ENCODE measurements at regions of chr5 and their contacts with region 1.

Region 1: DNA sequence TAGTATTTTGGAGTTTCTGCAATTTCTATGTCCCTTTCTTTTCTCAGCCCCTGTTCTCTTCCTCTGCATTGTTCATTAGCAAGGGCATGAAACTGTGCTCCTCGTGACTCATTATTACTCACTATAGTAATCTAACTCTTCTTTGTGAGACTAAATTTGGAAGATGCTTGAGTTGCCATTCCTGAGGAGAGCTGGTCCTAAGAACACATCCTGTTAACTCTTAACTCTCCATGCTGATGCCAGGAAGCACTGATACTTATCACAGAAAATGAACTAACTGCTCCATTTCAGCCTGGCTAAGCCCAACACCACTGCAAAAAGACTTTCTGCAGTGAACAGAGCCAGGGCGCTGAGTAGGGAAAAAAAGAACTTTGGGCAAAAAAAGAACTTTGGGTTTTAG is 10.6 kb upstream of the CSNK1A1 start:
- DNase-seq: no peak
- ATAC-seq: no peak
- H3K4me3 ChIP-seq: no peak overlapping the region
- H3K4me3 Mint-ChIP-seq: peak overlapping the region in 8 of 10 donors; percentile 4 to 67 (median 56)
- H3K27ac ChIP-seq: peak overlapping the region; percentile 50
- H3K27ac Mint-ChIP-seq: peak overlapping the region; percentile 57 to 84 (median 74)
- H3K4me1 ChIP-seq: peaks cover 0 to 17% of the 10 kb centered on the region in 2 donors
- H3K4me1 Mint-ChIP-seq: peaks cover 14 to 36% (median 25%) of the 10 kb centered on the region in 7 donors
- H3K27me3 ChIP-seq: no peaks in the 10 kb centered on the region
- H3K27me3 Mint-ChIP-seq: no peaks in the 10 kb centered on the region

Region 2: GRCh38 chr5:149005077-149005892 is 556.6 kb before region 1 on chr5:
- CTCF ChIA-PET with region 1: no interaction called
- POLR2A ChIA-PET with region 1: no interaction called
- intact Hi-C with region 1: no loop called
- DNase-seq: no peak
- ATAC-seq: no peak
- H3K4me3 ChIP-seq: no peak overlapping the region
- H3K4me3 Mint-ChIP-seq: no peak overlapping the region
- H3K27ac ChIP-seq: no peak overlapping the region
- H3K27ac Mint-ChIP-seq: no peak overlapping the region
- H3K4me1 ChIP-seq: no peaks in the 10 kb centered on the region
- H3K4me1 Mint-ChIP-seq: no peaks in the 10 kb centered on the region
- H3K27me3 ChIP-seq: no peaks in the 10 kb centered on the region
- H3K27me3 Mint-ChIP-seq: peaks cover 5 to 15% (median 9%) of the 10 kb centered on the region in 5 donors

Region 3: DNA sequence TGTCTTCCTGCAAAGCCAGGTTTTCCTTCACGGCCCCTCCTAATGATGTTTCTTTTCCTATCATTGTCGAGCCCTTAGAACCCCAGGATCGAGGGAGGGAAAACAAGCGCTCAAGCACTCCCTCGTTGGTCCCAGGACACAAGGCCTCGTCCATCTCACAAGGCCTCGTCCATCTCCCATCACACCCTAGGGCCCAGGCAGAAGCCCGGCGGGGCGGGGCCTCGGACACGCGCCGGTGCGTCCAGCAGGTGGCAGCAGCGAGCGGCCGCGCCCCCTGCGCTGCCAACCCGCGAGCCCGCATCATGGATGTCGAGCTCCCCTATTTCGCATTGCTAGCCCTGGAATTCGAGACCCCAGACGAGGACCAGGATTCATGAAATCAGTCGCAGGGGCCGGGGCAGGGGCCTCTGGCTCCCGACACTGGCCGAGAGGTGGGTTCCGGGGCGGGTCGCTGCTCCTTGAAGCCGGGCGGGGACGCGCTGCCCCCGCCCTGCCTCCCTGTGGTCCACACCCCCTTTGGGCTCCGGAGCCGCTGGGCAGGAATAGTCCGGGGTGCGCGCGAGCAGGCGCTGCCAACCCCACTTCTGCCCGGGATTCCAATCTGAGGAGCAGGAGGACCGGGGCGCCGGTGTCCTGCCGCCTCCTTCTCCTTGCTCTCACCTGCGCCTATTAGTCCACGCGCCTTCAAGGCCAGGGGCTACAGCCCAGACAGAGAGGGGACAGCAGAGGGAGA is 420.5 kb before region 1 on chr5 and contains the start of gene ABLIM3:
- CTCF ChIA-PET with region 1: no interaction called
- POLR2A ChIA-PET with region 1: no interaction called
- intact Hi-C with region 1: loop called (anchors 2 to 5 kb)
- DNase-seq: peak; percentile 49 to 87 (median 74)
- ATAC-seq: peak; percentile 96
- H3K4me3 ChIP-seq: peak within 1 kb of the TSS; percentile 62
- H3K4me3 Mint-ChIP-seq: peak within 1 kb of the TSS; percentile 11 to 79 (median 62)
- H3K27ac ChIP-seq: no peak within 1 kb of the TSS
- H3K27ac Mint-ChIP-seq: peak within 1 kb of the TSS in 1 of 9 donors; percentile 71
- H3K4me1 ChIP-seq: peaks cover 3 to 4% of the 10 kb centered on the region in 2 donors
- H3K4me1 Mint-ChIP-seq: peaks cover 0 to 6% (median 0%) of the 10 kb centered on the region in 7 donors
- H3K27me3 ChIP-seq: peaks cover 0 to 4% of the 10 kb centered on the region in 2 donors
- H3K27me3 Mint-ChIP-seq: peaks cover 5 to 58% (median 28%) of the 10 kb centered on the region in 5 donors
- total RNA-seq, gene ABLIM3: 0.08 to 1.3 TPM in 2 of 5 experiments, not detected in the others

Region 4: GRCh38 chr5:149367249-149367971 is 194.4 kb before region 1 on chr5:
- CTCF ChIA-PET with region 1: interaction called, 5 read pairs
- POLR2A ChIA-PET with region 1: no interaction called
- intact Hi-C with region 1: loop called in 1 of 2 experiments (anchors 5 kb)
- DNase-seq: peak in 7 of 9 donors; percentile 25 to 65 (median 49)
- ATAC-seq: peak; percentile 79
- H3K4me3 ChIP-seq: no peak overlapping the region
- H3K4me3 Mint-ChIP-seq: no peak overlapping the region
- H3K27ac ChIP-seq: no peak overlapping the region
- H3K27ac Mint-ChIP-seq: peak overlapping the region in 7 of 9 donors; percentile 13 to 68 (median 41)
- H3K4me1 ChIP-seq: peaks cover 0 to 7% of the 10 kb centered on the region in 2 donors
- H3K4me1 Mint-ChIP-seq: peaks cover 3 to 48% (median 27%) of the 10 kb centered on the region in 7 donors
- H3K27me3 ChIP-seq: no peaks in the 10 kb centered on the region
- H3K27me3 Mint-ChIP-seq: no peaks in the 10 kb centered on the region

Region 5: DNA sequence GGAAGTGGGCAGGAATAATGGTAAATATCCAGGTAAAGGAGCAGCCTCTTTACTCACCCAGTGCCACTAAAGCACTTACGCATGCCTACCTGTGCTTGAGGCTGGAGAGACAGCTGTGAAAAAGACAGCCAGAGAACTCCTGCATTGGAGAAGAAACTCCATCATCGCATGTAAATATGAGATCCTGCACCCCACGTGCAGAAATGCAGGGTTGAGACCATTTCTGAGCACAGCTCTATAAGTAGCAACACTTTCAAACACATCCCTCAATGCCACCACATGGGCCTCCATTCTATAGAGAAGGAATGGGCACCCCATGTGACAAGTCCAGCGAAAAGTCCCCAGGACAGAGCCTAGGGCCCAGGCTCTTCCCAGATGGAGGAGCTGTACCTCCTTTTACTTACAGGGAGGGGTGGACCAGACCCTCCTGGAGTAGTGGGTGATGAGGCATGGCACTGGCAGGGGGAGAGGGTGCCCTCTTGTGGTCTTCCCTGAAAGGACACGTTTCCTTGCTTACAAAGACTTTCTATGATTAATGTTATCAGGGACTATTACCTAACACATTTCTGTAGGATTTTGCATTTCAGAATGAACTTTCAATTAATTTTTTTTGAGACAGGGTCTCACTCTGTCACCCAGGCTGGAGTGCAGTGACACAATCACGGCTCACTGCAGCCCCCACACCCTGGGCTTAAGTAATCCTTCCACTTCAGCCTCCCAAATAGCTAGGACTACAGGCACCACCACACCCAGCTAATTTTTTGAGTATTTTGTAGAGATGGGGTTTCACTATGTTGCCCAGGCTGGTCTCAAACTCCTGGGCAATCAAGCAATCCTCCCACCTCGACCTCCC is 127.5 kb before region 1 on chr5:
- CTCF ChIA-PET with region 1: interaction called, 67 read pairs
- POLR2A ChIA-PET with region 1: no interaction called
- intact Hi-C with region 1: loop called in 1 of 2 experiments (anchors 1 kb)
- DNase-seq: peak in 8 of 9 donors; percentile 15 to 55 (median 43)
- ATAC-seq: peak; percentile 58
- H3K4me3 ChIP-seq: no peak overlapping the region
- H3K4me3 Mint-ChIP-seq: no peak overlapping the region
- H3K27ac ChIP-seq: no peak overlapping the region
- H3K27ac Mint-ChIP-seq: no peak overlapping the region
- H3K4me1 ChIP-seq: peaks cover 0 to 6% of the 10 kb centered on the region in 2 donors
- H3K4me1 Mint-ChIP-seq: peaks cover 0 to 26% (median 8%) of the 10 kb centered on the region in 7 donors
- H3K27me3 ChIP-seq: no peaks in the 10 kb centered on the region
- H3K27me3 Mint-ChIP-seq: no peaks in the 10 kb centered on the region

Region 6: DNA sequence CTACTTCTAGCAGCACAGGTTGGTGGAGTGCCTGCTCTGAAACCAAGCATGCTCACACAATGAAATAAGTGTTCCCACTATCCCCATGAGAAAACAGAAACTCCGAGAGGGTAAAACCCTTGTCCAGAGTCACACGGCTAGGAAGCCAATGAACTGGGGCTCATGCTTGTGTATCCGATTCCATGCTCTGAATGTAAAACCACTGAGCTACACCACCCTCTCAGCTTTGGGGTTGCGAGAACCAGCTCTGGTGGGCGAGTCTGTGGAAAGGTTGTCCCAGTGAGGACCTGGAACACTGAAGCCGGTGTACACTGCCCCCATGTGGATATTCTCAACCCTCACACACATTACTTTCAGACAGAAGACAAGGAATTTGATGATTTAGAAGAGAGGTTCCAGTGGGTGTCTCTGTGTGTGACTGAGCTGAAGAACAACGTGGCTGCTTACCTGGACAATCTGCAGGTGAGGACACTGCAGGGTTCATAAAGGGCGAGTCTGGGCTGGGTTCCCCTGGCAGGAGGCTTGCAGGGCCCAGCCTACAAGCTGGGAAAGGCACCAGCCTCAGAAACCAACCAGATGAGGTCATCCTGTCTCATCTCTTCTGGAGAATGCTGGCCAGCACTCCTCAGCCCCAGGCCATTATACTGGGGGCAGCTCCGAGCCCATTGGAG is 56.9 kb after region 1 on chr5:
- CTCF ChIA-PET with region 1: no interaction called
- POLR2A ChIA-PET with region 1: no interaction called
- intact Hi-C with region 1: loop called in 1 of 2 experiments (anchors 5 kb)
- DNase-seq: peak in 4 of 9 donors; percentile 10 to 21 (median 16)
- ATAC-seq: peak; percentile 51
- H3K4me3 ChIP-seq: no peak overlapping the region
- H3K4me3 Mint-ChIP-seq: no peak overlapping the region
- H3K27ac ChIP-seq: no peak overlapping the region
- H3K27ac Mint-ChIP-seq: no peak overlapping the region
- H3K4me1 ChIP-seq: no peaks in the 10 kb centered on the region
- H3K4me1 Mint-ChIP-seq: peaks cover 0 to 16% (median 0%) of the 10 kb centered on the region in 7 donors
- H3K27me3 ChIP-seq: no peaks in the 10 kb centered on the region
- H3K27me3 Mint-ChIP-seq: no peaks in the 10 kb centered on the region

Region 7: DNA sequence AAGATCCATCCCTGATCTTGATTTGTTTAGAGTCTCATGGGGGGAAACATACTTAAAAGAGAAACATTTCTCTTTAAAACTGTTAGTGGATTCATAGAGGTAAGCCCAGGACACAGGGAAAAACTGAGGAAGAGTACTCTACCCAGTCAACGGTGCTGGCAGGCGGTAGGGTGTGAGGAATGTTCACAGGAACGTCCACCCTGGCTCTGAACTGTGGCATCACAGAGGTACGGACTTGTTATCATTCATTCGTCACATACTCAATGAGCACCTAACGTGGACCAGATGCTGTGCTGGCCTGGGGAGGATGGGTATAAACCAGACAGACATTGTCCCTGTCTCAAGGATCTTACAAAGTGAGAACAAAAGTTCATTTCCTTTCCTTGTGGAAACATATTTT is 149.5 kb after region 1 on chr5:
- CTCF ChIA-PET with region 1: no interaction called
- POLR2A ChIA-PET with region 1: no interaction called
- intact Hi-C with region 1: no loop called
- DNase-seq: no peak
- ATAC-seq: no peak
- H3K4me3 ChIP-seq: no peak overlapping the region
- H3K4me3 Mint-ChIP-seq: no peak overlapping the region
- H3K27ac ChIP-seq: no peak overlapping the region
- H3K27ac Mint-ChIP-seq: no peak overlapping the region
- H3K4me1 ChIP-seq: no peaks in the 10 kb centered on the region
- H3K4me1 Mint-ChIP-seq: no peaks in the 10 kb centered on the region
- H3K27me3 ChIP-seq: no peaks in the 10 kb centered on the region
- H3K27me3 Mint-ChIP-seq: peaks cover 16 to 49% (median 25%) of the 10 kb centered on the region in 5 donors